PC-3 (cell line): ENCODE measurements at regions of chr15 and their contacts with region 1.

Region 1: DNA sequence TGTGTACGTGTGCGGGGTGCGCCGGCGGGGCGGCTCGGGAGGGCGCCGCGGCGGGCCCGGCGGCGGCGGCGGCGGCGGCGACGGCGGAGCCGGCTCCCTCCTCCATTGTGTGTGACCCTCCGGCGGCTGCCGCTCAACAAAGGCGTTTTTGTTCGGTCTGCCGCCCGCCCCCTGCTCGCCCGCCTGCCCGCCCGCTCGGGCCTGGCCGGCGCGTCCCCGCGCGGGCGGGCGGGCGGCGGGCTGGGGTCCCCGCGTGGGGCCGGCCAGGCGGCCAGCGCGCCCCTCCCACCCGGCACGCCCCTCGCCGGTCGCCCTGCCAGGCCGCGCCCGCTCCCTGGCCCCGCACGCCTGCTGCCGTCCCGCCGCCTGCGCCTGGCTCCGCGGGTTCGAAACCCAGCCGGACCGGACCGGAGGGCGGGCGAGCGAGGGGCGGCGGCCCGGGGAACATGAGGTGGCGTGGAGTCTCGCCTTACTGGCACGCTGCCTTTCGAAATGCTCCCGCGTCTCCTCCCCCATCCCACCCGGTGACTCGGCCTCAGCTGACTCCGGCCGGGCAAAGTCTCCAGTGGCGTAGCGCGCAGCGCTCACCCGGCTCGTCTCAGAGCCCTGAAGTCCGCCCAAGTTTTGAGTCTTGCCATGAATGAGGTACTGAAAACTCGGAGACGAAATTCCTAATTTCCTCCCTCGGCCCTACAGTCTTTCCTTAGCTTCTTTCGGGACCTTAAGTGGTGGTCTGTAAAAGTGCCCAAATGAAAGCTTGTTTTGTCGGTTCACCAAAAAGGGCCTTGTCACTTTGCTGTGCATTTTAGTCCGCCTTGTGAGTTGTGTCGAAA is 585 bp downstream of the MAPK6 start:
- DNase-seq: peak; percentile 65
- ATAC-seq: peak; percentile 63
- H3K4me3 ChIP-seq: peak overlapping the region; percentile 98
- H3K27ac ChIP-seq: peak overlapping the region; percentile 76
- H3K4me1 ChIP-seq: peaks cover 26% of the 10 kb centered on the region
- H3K27me3 ChIP-seq: no peaks in the 10 kb centered on the region
- CTCF ChIP-seq: no peak

Region 2: DNA sequence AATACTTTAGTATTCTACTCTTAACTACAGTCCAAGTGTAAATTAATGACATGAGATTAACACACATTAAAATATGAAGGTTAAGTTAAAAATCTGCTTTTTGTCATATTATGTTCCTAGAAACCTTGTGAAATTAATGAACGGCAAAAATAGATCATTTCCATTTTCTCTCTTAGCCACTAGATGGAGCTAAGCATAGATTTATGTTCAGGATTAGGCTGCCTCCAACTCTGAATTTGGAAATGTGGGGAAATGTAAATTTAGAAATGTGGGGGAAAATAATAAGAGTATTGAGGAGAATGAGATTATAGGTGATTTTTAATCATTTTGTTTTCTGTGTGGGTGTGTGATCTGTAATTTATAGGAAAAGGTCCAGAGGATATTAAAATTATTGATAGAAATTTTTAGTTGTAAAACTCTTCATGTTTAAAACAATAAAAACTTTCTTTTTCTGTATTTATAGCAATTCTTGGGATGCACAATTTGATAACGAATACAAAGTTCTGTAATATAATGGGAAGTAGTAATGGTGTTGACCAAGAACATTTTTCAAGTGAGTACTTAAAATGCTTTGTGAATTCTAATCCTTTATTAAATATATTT is 130.9 kb before region 1 on chr15:
- CTCF ChIA-PET with region 1: no interaction called
- POLR2A ChIA-PET with region 1: no interaction called
- intact Hi-C with region 1: no loop called
- DNase-seq: peak; percentile 57
- ATAC-seq: no peak; the same call in 1 of the 2 replicates
- H3K4me3 ChIP-seq: no peak overlapping the region
- H3K27ac ChIP-seq: 0 out of 2 replicates have a peak overlapping the region, but pooled peaks have one; percentile 12
- H3K4me1 ChIP-seq: peaks cover 17% of the 10 kb centered on the region
- H3K27me3 ChIP-seq: no peaks in the 10 kb centered on the region
- CTCF ChIP-seq: peak; percentile 83

Region 3: DNA sequence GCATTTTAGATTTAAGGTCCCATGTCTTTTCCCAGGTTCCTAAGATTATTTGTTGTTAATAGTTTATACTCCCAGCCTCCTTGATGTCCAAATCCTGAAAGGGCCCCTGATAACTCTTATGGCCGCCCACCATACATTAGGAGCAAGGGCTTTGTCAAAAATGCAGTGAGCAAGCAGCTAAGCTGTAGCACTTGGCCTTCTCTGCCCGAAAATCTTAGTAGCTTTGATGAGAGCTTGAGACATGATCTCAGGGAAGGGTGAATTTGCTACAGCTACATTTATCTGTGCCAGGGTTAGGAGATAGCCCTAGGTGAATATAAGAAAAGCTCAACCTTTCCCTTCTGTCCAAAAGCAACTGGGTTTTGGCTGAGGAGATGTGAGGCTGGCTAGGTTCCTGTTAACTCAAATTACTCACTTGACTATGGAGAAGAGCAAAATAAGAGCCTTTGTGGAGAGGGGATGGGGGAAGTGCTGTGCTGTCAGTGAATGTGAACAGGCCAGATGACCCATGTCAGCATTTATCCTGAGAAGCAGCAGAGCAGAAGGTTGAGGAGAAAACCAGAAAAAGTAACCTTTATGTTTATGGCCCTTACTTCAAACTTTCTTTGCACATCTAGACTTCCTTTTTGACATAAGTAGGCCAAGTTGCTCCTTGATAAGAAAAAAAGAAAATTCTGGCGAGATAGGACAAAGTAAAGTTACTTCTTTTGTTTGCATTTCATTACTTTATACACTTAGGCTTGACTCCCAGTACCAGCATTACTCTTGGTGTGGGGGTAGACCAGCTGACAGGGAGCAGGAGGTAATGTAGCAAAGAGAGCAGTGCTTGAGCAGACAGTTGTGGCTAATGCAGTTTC is 20.5 kb after region 1 on chr15:
- CTCF ChIA-PET with region 1: no interaction called
- POLR2A ChIA-PET with region 1: interaction called, 24 read pairs
- intact Hi-C with region 1: no loop called
- DNase-seq: no peak
- ATAC-seq: peak; percentile 38; the same call in 1 of the 2 replicates
- H3K4me3 ChIP-seq: no peak overlapping the region
- H3K27ac ChIP-seq: no peak overlapping the region
- H3K4me1 ChIP-seq: peaks cover 14% of the 10 kb centered on the region
- H3K27me3 ChIP-seq: no peaks in the 10 kb centered on the region
- CTCF ChIP-seq: no peak

Region 4: DNA sequence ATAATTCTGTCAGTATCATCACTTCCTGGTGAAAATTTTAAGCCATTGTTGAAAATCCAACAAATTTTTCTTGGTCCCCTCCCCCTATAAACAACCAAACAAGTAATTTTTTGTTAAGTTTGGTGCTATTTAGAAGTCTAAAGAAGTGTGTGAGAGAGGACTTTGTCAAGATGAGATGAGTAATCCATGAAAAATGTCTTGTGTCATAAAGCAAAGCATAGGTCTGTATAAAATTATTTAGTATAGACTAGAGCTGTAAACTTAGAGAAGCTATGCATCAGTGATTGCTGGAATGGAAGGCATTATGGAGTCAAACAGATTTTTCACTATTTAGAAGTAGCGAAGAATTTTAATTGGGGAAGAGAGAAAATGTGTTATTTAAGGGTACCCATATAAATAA is 30.8 kb after region 1 on chr15:
- CTCF ChIA-PET with region 1: interaction called, 3 read pairs
- POLR2A ChIA-PET with region 1: no interaction called
- intact Hi-C with region 1: loop called (anchors 1 kb)
- DNase-seq: peak; percentile 75
- ATAC-seq: peak; percentile 77
- H3K4me3 ChIP-seq: no peak overlapping the region
- H3K27ac ChIP-seq: no peak overlapping the region; the same call in 1 of the 2 replicates
- H3K4me1 ChIP-seq: peaks cover 41% of the 10 kb centered on the region
- H3K27me3 ChIP-seq: no peaks in the 10 kb centered on the region
- CTCF ChIP-seq: no peak

Region 5: GRCh38 chr15:52060501-52060900 is 40.9 kb after region 1 on chr15:
- CTCF ChIA-PET with region 1: no interaction called
- POLR2A ChIA-PET with region 1: no interaction called
- intact Hi-C with region 1: no loop called
- DNase-seq: no peak
- ATAC-seq: no peak
- H3K4me3 ChIP-seq: no peak overlapping the region
- H3K27ac ChIP-seq: no peak overlapping the region
- H3K4me1 ChIP-seq: peaks cover 5% of the 10 kb centered on the region
- H3K27me3 ChIP-seq: no peaks in the 10 kb centered on the region
- CTCF ChIP-seq: no peak

Region 6: GRCh38 chr15:52078876-52079700 is 59.5 kb after region 1 on chr15:
- CTCF ChIA-PET with region 1: no interaction called
- POLR2A ChIA-PET with region 1: interaction called, 5 read pairs
- intact Hi-C with region 1: loop called (anchors 2 kb)
- DNase-seq: peak; percentile 68
- ATAC-seq: peak; percentile 60
- H3K4me3 ChIP-seq: no peak overlapping the region
- H3K27ac ChIP-seq: no peak overlapping the region
- H3K4me1 ChIP-seq: peaks cover 22% of the 10 kb centered on the region
- H3K27me3 ChIP-seq: no peaks in the 10 kb centered on the region
- CTCF ChIP-seq: peak; percentile 85

Region 7: GRCh38 chr15:52093539-52094502 is 74.2 kb after region 1 on chr15:
- CTCF ChIA-PET with region 1: no interaction called
- POLR2A ChIA-PET with region 1: no interaction called
- intact Hi-C with region 1: loop called (anchors 2 kb)
- DNase-seq: peak; percentile 93
- ATAC-seq: peak; percentile 85
- H3K4me3 ChIP-seq: no peak overlapping the region; the same call in 1 of the 2 replicates
- H3K27ac ChIP-seq: peak overlapping the region; percentile 97
- H3K4me1 ChIP-seq: peaks cover 33% of the 10 kb centered on the region
- H3K27me3 ChIP-seq: no peaks in the 10 kb centered on the region
- CTCF ChIP-seq: no peak